ENCODE measurements at regions of chr12 and their contacts with region 1.

Region 1: GRCh38 chr12:53321074-53321814 is at the start of gene AAAS:
- DNase-seq: peak; percentile 95
- ATAC-seq: peak; percentile 88 to 90
- total RNA-seq, gene AAAS: 35.7 to 40.3 TPM

Region 2: GRCh38 chr12:53102883-53103807 is 218.1 kb before region 1 on chr12 and contains the start of gene SOAT2:
- intact Hi-C with region 1: no loop called
- DNase-seq: no peak
- ATAC-seq: no peak
- total RNA-seq, gene SOAT2: not detected

Region 3: GRCh38 chr12:53220801-53221202 is 100.4 kb before region 1 on chr12:
- intact Hi-C with region 1: loop called in 1 of 2 experiments (anchors 1 kb)
- DNase-seq: peak; percentile 94
- ATAC-seq: peak; percentile 87 to 93

Region 4: GRCh38 chr12:53344824-53345485 is 23.7 kb after region 1 on chr12:
- intact Hi-C with region 1: loop called in 1 of 2 experiments (anchors 2 kb)
- DNase-seq: peak; percentile 80
- ATAC-seq: peak; percentile 93 to 94

Region 5: DNA sequence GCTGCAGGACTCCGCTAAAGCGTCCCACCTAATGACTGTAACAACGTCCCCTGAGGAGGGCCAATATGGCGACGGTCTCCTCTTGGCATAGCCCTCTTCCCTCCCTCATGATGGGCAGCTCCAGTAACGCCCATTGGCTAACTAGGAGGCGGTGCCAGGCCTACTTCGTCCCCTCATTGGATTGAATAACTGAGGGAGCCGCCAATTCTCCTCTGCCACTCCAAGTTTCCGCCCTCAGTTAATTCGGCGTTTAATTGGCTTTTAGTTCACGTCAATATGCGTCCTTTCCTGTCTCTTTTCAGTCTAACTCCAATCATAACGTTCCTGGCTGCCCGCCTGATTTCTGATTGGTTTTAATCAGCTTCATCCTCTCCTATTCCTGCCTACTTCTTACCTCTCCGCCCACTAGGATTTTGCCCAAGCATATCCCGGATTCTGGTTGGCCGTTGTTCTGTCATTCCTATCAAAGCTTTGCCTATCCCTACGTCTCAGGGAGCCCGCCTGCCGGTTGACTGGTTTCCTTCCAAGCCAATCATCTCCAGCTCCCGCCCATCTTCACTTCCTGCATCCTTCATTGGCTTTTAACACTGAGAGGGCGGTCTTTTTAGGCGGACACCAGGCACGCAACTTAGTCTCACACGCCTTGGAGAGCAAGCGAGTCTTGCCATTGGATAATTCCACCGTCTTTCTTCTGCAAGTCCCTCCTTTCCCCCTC is 58.3 kb after region 1 on chr12:
- intact Hi-C with region 1: loop called in 1 of 2 experiments (anchors 2 kb)
- DNase-seq: peak; percentile 99
- ATAC-seq: peak; percentile 85 to 90

Region 6: DNA sequence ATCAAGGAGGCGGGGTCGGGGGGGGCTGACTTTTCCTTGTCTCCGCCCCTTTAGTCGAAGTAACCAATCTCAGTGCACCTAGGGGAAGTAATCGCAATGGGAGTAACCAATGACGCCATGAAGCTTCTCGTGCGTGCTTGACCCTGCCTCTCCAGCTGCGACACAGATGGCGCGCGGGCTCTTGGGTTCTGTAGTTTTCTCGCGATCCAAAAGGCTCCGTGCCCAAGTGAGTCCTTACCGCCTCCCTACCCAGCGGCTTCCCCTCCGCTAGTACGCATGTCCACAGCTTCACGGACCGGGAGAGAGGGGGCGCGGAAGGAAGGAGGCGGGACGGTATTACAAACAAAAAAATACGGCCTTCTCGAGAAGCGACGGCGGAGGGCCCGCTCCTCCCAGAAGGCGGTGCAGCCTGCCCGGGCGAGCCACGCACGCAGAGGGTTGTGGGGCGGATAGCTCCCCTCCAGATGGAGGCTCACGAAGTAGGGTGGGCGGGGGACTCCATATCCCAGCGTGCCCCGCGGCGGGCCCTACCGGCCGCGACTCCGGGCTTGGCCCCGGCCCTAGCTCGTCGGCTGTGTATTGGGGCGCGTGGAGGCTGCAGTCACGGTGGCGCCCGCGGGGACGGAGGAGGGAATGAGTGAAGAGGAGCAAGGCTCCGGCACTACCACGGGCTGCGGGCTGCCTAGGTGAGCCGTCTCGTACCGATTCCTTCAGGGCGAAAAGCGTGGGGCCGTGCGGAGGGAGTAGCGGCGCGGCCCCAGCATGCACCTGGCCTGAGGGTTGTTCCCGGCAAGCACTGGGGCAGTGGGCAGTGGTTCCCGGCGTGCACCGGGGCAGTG is 179.8 kb after region 1 on chr12 and contains the start of gene TARBP2:
- intact Hi-C with region 1: loop called in 1 of 2 experiments (anchors 10 kb)
- DNase-seq: peak; percentile 98
- ATAC-seq: peak; percentile 84 to 88
- total RNA-seq, gene TARBP2: 12.5 to 15.3 TPM